WTC11 (cell line): ENCODE measurements at regions of chr22 and their contacts with region 1.

Region 1: GRCh38 chr22:31872209-31872608 is 72.1 kb upstream of the YWHAH start:
- DNase-seq: peak; percentile 43
- ATAC-seq: peak; percentile 77
- H3K4me3 Mint-ChIP-seq: no peak overlapping the region
- H3K27ac Mint-ChIP-seq: no peak overlapping the region
- H3K4me1 Mint-ChIP-seq: peaks cover 23% of the 10 kb centered on the region
- H3K27me3 Mint-ChIP-seq: no peaks in the 10 kb centered on the region
- CTCF ChIP-seq: no peak

Region 2: DNA sequence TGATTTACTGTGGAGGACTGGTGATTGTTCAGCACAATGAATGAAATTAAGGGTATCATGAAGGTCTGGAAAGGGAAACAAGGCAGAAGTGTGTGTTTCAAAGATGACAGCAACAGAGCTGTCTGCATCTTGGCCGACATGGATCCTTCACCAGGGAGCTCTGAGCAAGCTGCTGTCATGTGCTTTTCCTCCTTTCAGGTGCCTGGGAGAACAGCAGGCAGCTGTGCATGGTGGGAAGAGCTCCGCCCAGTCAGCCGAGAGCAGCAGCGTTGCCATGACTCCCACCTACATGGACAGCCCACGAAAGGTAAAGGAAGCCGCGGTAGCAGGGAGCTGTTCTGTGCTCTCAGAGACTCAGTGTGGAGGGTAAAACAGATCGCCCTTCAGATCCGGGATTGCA is 15.0 kb before region 1 on chr22:
- CTCF ChIA-PET with region 1: interaction called, 10 read pairs
- POLR2A ChIA-PET with region 1: interaction called, 3 read pairs
- DNase-seq: peak; percentile 76
- ATAC-seq: peak; percentile 100
- H3K4me3 Mint-ChIP-seq: no peak overlapping the region; the same call in 1 of the 2 replicates
- H3K27ac Mint-ChIP-seq: peak overlapping the region; percentile 37
- H3K4me1 Mint-ChIP-seq: peaks cover 10% of the 10 kb centered on the region
- H3K27me3 Mint-ChIP-seq: no peaks in the 10 kb centered on the region
- CTCF ChIP-seq: no peak

Region 3: DNA sequence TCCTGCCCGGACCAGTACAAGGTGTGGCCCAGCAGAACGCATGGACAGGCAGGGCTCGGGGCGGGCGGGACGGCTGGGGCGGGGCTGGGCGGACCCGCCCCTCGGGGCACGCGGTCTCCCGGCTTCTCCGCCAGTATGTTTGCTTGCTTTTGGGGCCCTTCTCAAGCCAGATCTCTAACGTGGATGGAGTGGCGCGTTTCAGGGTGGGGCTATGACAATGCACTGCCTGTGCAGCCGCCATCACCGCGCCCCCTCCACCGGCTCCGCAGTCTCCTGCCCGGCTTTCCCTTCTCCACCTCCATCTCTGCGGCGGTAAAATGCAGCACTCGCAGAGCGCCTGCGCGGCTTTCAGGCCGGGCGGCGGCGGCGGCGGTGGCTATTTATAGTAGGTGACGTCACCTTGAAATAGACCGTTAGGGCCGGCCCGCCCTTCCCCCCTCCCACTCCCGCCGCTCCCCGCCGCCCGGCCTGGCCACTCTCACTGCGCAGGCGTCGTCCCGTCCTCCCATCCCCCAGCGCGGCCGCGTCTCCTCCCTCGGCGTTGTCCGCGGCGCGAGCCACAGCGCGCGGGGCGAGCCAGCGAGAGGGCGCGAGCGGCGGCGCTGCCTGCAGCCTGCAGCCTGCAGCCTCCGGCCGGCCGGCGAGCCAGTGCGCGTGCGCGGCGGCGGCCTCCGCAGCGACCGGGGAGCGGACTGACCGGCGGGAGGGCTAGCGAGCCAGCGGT is 71.9 kb after region 1 on chr22 and contains the start of gene YWHAH:
- CTCF ChIA-PET with region 1: interaction called, 13 read pairs
- POLR2A ChIA-PET with region 1: no interaction called
- DNase-seq: peak; percentile 93
- ATAC-seq: peak; percentile 77
- H3K4me3 Mint-ChIP-seq: peak within 1 kb of the TSS; percentile 76
- H3K27ac Mint-ChIP-seq: peak within 1 kb of the TSS; percentile 92
- H3K4me1 Mint-ChIP-seq: peaks cover 10% of the 10 kb centered on the region
- H3K27me3 Mint-ChIP-seq: peaks cover 10% of the 10 kb centered on the region
- CTCF ChIP-seq: no peak
- total RNA-seq, gene YWHAH: 190 to 205 TPM (median 203 TPM) in 3 replicates